Activated naive CD8-positive, alpha-beta T cell treated with anti-CD3 and anti-CD28 coated beads, Interleukin-2, amount 10 ng/mL, durations not matched to agents 7 days and 5 days (primary cell): ENCODE measurements at regions of chr14 and their contacts with region 1.

Region 1: GRCh38 chr14:24431569-24432258 is 2.0 kb downstream of the KHNYN start:
- DNase-seq: peak; percentile 85
- ATAC-seq: peak; percentile 61
- H3K4me3 Mint-ChIP-seq: peak overlapping the region; percentile 95
- H3K27ac Mint-ChIP-seq: peak overlapping the region; percentile 97
- H3K4me1 Mint-ChIP-seq: peaks cover 34% of the 10 kb centered on the region
- H3K27me3 Mint-ChIP-seq: no peaks in the 10 kb centered on the region

Region 2: DNA sequence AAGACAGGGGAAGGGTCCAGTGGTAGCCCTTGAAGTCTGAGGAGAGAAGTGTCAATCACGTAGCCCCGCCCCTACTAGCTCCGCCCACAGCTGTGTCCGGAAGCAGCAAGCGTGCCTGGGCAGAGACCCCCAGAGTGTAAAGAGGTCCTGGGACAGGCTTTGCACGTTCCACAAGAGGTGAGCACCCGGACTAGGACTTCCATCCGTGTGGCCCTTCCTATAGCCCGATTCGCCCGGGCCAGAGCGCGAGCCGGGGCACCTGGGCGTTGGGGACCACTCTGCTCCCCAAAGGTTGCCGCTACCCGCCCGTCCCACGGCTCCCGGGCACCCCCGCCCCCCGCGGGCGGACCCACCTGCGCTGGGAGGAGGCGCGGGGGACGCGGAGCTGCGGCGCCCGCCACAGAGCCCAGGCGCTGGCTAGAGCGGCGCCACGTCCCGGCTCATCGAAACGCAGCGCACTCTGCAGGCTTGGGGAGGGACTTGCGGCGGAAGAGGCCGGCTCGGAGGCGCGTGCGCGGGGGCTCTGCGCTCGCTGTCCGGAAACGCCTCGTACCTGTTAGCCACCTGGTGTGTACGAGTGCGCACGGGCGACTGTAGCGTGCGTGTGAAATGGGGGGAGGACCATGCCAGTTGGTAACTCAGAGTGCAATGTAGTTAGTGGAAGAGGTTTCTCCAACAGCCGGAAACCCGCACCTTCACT is 160.4 kb before region 1 on chr14 and contains the start of gene RABGGTA:
- POLR2A ChIA-PET with region 1: interaction called, 16 read pairs
- DNase-seq: peak; percentile 91
- ATAC-seq: peak; percentile 88
- H3K4me3 Mint-ChIP-seq: peak within 1 kb of the TSS; percentile 95
- H3K27ac Mint-ChIP-seq: peak within 1 kb of the TSS; percentile 97
- H3K4me1 Mint-ChIP-seq: peaks cover 37% of the 10 kb centered on the region
- H3K27me3 Mint-ChIP-seq: no peaks in the 10 kb centered on the region
- total RNA-seq, gene RABGGTA: 42.1 to 48.8 TPM

Region 3: DNA sequence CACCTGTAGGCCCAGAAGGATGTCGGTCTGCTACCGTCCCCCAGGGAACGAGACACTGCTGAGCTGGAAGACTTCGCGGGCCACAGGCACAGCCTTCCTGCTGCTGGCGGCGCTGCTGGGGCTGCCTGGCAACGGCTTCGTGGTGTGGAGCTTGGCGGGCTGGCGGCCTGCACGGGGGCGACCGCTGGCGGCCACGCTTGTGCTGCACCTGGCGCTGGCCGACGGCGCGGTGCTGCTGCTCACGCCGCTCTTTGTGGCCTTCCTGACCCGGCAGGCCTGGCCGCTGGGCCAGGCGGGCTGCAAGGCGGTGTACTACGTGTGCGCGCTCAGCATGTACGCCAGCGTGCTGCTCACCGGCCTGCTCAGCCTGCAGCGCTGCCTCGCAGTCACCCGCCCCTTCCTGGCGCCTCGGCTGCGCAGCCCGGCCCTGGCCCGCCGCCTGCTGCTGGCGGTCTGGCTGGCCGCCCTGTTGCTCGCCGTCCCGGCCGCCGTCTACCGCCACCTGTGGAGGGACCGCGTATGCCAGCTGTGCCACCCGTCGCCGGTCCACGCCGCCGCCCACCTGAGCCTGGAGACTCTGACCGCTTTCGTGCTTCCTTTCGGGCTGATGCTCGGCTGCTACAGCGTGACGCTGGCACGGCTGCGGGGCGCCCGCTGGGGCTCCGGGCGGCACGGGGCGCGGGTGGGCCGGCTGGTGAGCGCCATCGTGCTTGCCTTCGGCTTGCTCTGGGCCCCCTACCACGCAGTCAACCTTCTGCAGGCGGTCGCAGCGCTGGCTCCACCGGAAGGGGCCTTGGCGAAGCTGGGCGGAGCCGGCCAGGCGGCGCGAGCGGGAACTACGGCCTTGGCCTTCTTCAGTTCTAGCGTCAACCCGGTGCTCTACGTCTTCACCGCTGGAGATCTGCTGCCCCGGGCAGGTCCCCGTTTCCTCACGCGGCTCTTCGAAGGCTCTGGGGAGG is 120.8 kb before region 1 on chr14 and contains the start of gene LTB4R:
- POLR2A ChIA-PET with region 1: interaction called, 30 read pairs
- DNase-seq: peak; percentile 83
- ATAC-seq: peak; percentile 88
- H3K4me3 Mint-ChIP-seq: peak within 1 kb of the TSS; percentile 84
- H3K27ac Mint-ChIP-seq: peak within 1 kb of the TSS; percentile 84
- H3K4me1 Mint-ChIP-seq: peaks cover 66% of the 10 kb centered on the region
- H3K27me3 Mint-ChIP-seq: no peaks in the 10 kb centered on the region
- total RNA-seq, gene LTB4R: 27.0 to 27.8 TPM

Region 4: DNA sequence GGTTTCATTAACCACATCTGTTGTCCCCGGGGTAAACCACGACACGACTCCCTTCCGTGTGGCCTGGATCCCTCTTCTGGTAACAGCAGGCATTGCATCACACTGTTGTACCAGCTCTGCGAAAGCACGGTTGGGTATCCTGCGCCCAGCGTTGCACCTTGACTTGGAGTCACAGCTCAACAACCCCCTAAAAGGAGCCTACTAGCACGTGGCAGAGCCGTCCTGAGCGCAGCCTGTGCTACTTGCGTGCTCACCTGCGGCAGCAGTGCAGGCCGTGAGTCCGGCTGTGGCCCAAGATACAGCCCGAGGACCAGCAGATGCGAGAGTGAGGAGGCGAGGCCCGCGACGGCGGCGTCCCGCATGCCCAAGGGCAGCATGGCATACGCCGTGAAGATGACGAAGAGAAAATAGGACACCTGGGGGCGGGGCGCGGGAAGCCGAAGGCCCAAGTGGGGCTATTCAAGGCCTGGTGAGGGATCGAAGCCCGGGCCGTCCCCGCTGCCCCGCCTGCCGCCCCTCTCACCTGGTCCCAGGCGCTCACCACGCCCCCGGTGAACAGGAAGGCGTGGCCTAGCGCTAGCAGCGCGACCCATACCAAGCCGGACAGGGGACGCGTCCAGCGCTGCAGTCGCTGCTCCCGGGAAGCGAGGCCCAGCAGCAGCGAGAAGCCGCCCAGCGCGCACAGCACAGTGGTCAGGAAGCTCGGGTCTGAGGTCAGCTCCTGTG is 99.3 kb before region 1 on chr14:
- POLR2A ChIA-PET with region 1: interaction called, 135 read pairs
- DNase-seq: peak; percentile 76
- ATAC-seq: peak; percentile 73
- H3K4me3 Mint-ChIP-seq: peak overlapping the region; percentile 82
- H3K27ac Mint-ChIP-seq: peak overlapping the region; percentile 77
- H3K4me1 Mint-ChIP-seq: peaks cover 46% of the 10 kb centered on the region
- H3K27me3 Mint-ChIP-seq: peaks cover 32% of the 10 kb centered on the region

Region 5: DNA sequence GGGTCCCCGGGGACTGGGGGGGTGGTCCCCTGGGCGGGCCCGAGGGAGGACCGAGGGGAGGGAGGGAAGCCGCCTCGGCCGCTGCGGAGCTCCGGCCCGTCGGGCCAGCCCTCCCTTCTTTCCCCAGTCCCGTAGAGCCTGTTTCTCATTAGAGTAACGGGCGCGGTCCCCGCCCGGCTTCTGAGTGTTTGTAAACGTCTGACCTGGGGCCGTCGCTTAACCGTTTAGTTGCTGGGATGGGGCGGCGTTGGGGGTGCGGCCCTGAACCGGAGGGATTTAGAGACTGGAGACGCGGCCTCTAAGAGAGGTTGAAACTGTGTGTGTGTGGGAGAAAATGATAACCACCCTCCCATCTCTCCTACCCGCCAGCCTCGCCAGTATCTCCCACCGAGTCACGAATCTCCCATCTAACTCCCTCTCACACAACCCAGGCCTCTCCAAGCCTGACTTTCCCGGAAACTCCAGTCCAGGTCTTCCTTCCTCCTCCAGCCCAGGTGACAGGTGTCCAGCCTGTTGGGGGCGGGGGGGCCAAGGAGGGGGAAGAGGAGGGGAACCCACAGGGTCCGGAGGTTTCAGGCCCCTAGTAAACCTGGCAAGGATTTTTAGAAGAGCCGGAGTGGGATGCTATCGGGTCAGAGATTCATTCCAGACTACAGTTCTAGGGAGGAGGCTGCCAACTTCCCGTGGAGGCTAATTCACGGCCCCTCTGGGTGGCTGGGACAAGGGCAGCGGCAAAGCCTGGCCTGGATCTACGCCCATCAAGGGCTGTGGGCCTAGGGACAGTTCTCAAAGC is 64.8 kb before region 1 on chr14:
- POLR2A ChIA-PET with region 1: interaction called, 14 read pairs
- DNase-seq: peak; percentile 49
- ATAC-seq: peak; percentile 7
- H3K4me3 Mint-ChIP-seq: peak overlapping the region; percentile 53
- H3K27ac Mint-ChIP-seq: no peak overlapping the region
- H3K4me1 Mint-ChIP-seq: peaks cover 23% of the 10 kb centered on the region
- H3K27me3 Mint-ChIP-seq: peaks cover 56% of the 10 kb centered on the region